ENCODE measurements at regions of chr12 and their contacts with region 1.

Region 1: DNA sequence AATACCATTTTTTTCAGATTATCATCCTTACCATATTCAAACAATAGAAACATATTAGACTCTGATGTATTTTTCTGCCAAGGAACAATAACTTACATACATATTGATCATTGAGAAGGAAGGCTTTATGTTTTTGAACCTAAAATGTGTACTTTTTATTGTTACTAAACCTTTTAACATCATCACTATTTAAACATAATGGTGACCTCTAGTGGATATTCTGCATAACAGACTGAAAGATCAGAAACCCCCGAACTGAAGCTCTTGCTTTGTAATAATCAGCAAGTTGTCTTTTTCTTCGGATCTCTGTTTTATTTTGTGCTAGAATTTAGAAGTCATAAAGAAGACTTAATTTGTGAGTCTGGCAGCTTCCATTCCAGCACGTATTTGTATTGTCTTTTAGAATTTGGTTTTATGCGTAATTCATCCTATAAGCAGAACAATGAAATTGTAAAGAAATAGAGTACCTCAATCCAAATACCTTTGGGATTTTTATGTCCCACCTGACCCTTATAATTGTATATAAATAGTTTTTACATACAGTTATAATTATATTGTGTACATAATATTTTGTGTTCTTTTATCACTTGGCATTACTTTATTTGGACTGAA is 125.9 kb upstream of the ATF1 start:
- DNase-seq: no peak
- H3K4me3 ChIP-seq: peak overlapping the region in 5 of 59 donors; percentile 3 to 31 (median 5)
- H3K27ac ChIP-seq: peak overlapping the region in 56 of 59 donors; percentile 13 to 91 (median 78)
- H3K27me3 ChIP-seq: no peaks in the 10 kb centered on the region
- CTCF ChIP-seq: peak; percentile 63 to 88 (median 76)

Region 2: GRCh38 chr12:50589650-50590435 is 48.1 kb before region 1 on chr12:
- intact Hi-C with region 1: loop called in 1 of 2 experiments (anchors 10 kb)
- DNase-seq: no peak
- H3K4me3 ChIP-seq: no peak overlapping the region
- H3K27ac ChIP-seq: peak overlapping the region in 2 of 59 donors; percentile 13 to 36
- H3K27me3 ChIP-seq: no peaks in the 10 kb centered on the region
- CTCF ChIP-seq: no peak

Region 3: GRCh38 chr12:50699940-50700339 is 62.0 kb after region 1 on chr12:
- intact Hi-C with region 1: no loop called
- DNase-seq: peak in 1 of 10 donors; percentile 20
- H3K4me3 ChIP-seq: no peak overlapping the region
- H3K27ac ChIP-seq: peak overlapping the region in 28 of 59 donors; percentile 0 to 95 (median 36)
- H3K27me3 ChIP-seq: no peaks in the 10 kb centered on the region
- CTCF ChIP-seq: no peak

Measured in dorsolateral prefrontal cortex (tissue), 120 donors.